ENCODE measurements at regions of chr10 and their contacts with region 1.

Region 1: DNA sequence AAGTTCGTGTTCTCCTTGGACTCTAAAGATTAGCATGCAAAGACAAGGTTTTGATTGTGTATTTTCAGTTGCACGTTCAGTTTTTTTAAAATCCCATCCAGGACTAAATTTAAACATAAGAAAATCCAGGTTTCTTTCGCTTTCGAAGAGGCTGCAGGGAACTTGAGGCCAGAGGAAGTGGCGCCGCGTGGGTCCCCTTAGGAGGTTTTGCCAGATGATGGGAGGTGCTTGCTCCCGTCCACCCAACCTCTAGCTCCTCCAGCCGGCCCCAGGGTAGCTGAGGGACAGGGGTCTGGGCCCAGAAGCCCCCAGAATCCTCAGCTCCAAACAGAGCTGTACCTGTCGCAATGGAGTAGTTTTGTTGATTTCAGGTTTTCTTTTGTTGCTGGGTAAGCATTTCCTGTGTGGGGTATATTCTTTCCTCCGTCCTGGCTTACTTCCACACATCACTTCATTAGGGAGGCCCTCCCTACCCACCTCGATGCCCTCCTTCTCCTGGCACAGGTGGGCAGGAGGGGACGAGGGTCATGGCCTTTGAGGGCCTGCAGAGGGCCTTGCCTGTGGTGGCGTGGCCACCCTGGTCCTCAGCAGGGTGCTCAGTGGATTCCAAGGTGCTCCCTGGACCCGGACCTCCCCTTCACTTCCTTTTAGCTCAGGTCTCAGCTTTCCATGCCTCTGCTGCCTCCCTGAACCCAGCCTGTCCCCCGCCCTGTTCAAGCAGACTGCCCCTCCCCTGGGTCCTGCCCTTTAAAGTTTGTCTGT is 32.6 kb downstream of the LHPP start:
- DNase-seq: no peak
- H3K4me3 ChIP-seq: no peak overlapping the region
- H3K27ac ChIP-seq: no peak overlapping the region
- H3K4me1 ChIP-seq: no peaks in the 10 kb centered on the region
- H3K27me3 ChIP-seq: no peaks in the 10 kb centered on the region
- CTCF ChIP-seq: no peak

Region 2: DNA sequence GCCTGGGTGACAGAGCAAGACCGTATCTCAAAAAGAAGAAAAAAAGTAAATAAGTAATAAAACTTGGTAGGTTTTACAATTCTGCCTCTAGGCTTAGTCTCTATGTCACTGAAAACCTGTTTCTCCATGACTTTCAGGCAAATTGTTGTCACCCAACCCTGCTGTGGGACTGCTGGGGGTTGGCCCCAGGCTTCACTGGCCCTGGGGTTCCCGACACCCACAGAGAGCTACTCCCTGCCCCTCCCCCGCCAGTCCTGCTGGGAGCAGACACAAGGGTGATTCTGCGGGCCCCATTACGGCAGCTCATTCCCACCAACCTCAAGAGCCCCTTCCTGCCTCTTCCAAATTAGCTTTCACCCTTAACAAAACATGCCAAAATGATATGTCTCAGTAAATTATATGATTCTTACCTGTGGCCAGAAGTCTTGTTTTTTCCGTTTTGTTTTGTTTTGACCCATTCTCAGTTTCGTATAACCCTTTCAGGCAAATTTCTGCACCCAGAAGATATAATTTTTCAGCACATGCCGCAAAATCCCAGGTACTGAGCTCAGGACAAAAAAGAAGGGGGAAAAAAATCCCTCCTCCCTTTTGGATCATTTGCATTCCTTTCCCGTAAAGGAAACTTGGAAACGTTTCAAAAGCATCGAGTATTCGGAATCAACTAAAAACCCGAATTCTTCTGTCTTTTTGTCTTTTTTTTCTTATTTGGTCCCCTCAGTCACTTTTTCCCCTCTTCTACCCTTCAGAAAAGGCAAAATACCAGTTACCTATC is 428.7 kb before region 1 on chr10:
- CTCF ChIA-PET with region 1: no interaction called
- POLR2A ChIA-PET with region 1: interaction called, 11 read pairs
- intact Hi-C with region 1: no loop called
- DNase-seq: no peak
- H3K4me3 ChIP-seq: no peak overlapping the region
- H3K27ac ChIP-seq: no peak overlapping the region
- H3K4me1 ChIP-seq: peaks cover 17% of the 10 kb centered on the region
- H3K27me3 ChIP-seq: no peaks in the 10 kb centered on the region
- CTCF ChIP-seq: no peak

Region 3: GRCh38 chr10:124671486-124672075 is 177.4 kb after region 1 on chr10:
- CTCF ChIA-PET with region 1: no interaction called
- POLR2A ChIA-PET with region 1: no interaction called
- intact Hi-C with region 1: no loop called
- DNase-seq: peak; percentile 53
- H3K4me3 ChIP-seq: no peak overlapping the region
- H3K27ac ChIP-seq: peak overlapping the region; percentile 10
- H3K4me1 ChIP-seq: peaks cover 28% of the 10 kb centered on the region
- H3K27me3 ChIP-seq: no peaks in the 10 kb centered on the region
- CTCF ChIP-seq: peak; percentile 21; the same call in 1 of the 2 replicates

Region 4: DNA sequence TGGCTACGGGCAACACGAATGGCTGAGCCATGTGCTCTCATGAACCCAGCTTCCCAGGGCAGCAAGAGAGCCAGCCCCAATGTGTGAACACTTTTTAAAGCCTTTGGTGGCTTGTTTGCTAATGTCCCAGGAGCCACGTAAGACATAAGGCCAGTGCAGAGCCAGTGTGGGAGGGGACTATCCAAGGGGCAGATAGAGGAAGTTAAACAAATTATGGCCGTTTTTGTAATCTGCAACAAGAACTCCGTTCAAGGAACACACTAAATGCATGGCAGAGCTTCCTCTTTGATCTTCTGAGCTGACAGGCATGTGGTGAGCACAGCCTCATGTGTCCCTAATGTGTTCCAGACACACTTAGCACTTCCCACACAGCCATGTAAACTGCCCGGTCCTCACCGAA is 1055.4 kb after region 1 on chr10:
- CTCF ChIA-PET with region 1: no interaction called
- POLR2A ChIA-PET with region 1: no interaction called
- intact Hi-C with region 1: no loop called
- DNase-seq: no peak
- H3K4me3 ChIP-seq: no peak overlapping the region
- H3K27ac ChIP-seq: no peak overlapping the region
- H3K4me1 ChIP-seq: peaks cover 9% of the 10 kb centered on the region
- H3K27me3 ChIP-seq: peaks cover 6% of the 10 kb centered on the region
- CTCF ChIP-seq: no peak

Measured in A673 (cell line).